Activated naive CD4-positive, alpha-beta T cell treated with anti-CD3 and anti-CD28 coated beads, Interleukin-2, amount 10 ng/mL, durations not matched to agents 7 days and 5 days (primary cell): ENCODE measurements at regions of chr16 and their contacts with region 1.

Region 1: GRCh38 chr16:68264128-68265077 is at the start of gene SLC7A6:
- DNase-seq: peak; percentile 86
- H3K4me3 Mint-ChIP-seq: peak within 1 kb of the TSS; percentile 91
- H3K27ac Mint-ChIP-seq: peak within 1 kb of the TSS; percentile 98
- H3K4me1 Mint-ChIP-seq: peaks cover 66% of the 10 kb centered on the region
- H3K27me3 Mint-ChIP-seq: no peaks in the 10 kb centered on the region

Region 2: GRCh38 chr16:68251832-68252231 is 12.6 kb before region 1 on chr16:
- CTCF ChIA-PET with region 1: interaction called, 24 read pairs
- DNase-seq: no peak
- H3K4me3 Mint-ChIP-seq: no peak overlapping the region
- H3K27ac Mint-ChIP-seq: no peak overlapping the region
- H3K4me1 Mint-ChIP-seq: peaks cover 5% of the 10 kb centered on the region
- H3K27me3 Mint-ChIP-seq: no peaks in the 10 kb centered on the region

Region 3: GRCh38 chr16:68281368-68282063 is 17.1 kb after region 1 on chr16:
- CTCF ChIA-PET with region 1: interaction called, 41 read pairs
- DNase-seq: peak; percentile 63
- H3K4me3 Mint-ChIP-seq: peak overlapping the region; percentile 20
- H3K27ac Mint-ChIP-seq: peak overlapping the region; percentile 86
- H3K4me1 Mint-ChIP-seq: peaks cover 77% of the 10 kb centered on the region
- H3K27me3 Mint-ChIP-seq: no peaks in the 10 kb centered on the region

Region 4: DNA sequence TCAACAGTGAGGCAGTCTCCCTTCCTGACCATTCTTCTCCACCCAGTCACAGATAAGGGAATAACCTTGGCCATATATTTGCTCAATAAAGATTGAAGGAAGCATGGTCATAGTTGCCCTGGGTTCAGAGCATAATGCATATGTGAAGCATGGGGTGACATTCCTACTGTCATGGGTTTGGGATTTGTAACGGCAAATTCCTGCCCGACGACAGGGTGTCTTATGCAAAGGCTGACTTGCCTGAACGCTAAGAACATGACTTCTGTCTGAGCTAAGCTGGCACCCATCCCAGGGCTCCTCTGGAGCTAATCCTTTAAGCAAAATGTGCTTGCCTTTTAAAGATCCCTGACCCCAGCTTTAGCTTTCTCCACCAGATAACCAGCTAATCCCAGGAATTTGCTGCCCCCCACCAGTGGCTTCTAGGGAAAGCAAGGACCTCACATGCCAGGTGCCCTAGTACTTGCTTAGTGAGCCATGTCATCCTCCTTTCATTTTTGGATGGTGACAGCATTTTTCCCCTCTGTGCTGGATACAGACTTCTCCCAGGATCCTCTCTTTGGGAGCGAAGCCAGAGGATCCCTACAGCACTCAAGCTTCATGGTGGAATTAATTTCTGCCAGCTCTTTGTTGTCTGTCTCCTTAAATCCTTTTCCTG is 34.6 kb after region 1 on chr16:
- CTCF ChIA-PET with region 1: interaction called, 20 read pairs
- DNase-seq: no peak
- H3K4me3 Mint-ChIP-seq: no peak overlapping the region
- H3K27ac Mint-ChIP-seq: peak overlapping the region; percentile 26
- H3K4me1 Mint-ChIP-seq: peaks cover 9% of the 10 kb centered on the region
- H3K27me3 Mint-ChIP-seq: no peaks in the 10 kb centered on the region

Region 5: GRCh38 chr16:68328151-68328859 is 63.9 kb after region 1 on chr16:
- CTCF ChIA-PET with region 1: interaction called, 432 read pairs
- DNase-seq: peak; percentile 86
- H3K4me3 Mint-ChIP-seq: no peak overlapping the region
- H3K27ac Mint-ChIP-seq: no peak overlapping the region
- H3K4me1 Mint-ChIP-seq: peaks cover 21% of the 10 kb centered on the region
- H3K27me3 Mint-ChIP-seq: no peaks in the 10 kb centered on the region